ENCODE measurements at regions of chr2 and their contacts with region 1.

Region 1: DNA sequence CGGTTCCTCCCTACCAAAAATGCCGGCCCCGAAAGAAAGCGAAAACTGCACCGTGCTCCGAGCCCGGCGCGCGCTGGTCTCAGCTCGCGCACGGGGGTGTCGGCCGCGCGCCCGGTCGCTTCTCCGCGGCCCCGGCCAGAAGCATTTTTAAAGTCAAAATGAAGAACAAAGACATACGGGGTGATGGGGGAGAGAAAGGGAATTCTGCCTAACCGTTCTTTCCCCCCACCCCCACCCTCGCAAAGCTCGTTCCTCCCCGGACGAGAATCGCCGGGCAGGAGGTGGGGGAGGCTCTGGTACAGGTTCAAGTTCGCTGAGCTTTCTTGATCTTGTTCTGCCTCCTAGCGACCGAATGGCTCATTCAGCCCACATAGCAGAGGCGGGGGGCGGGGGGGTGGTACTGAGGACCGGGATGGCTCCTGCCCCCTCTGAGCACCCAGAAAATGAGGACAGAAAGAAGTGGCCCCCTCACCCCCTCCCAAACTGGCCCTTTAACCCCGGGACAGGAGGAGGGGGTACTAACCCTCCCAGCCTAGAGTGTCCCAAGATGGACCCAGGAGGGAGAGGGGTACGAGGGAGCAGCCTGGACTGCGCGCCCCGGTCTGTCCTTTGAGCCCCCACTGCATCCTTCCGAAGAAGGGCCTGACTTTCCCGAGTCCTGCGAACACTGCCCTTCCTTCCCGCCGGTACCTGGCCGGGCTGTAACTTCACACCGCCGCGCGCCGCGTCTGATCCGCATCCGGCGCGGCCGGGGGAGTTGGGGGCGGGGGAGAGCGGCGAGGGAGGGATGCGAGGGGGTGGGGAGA is 3.1 kb downstream of the BCL11A start:
- DNase-seq: peak in 7 of 9 experiments; percentile 20 to 76 (median 53)
- ATAC-seq: peak; percentile 53
- H3K4me3 ChIP-seq: peak overlapping the region; percentile 58 to 67
- H3K4me3 Mint-ChIP-seq: peak overlapping the region; percentile 90
- H3K27ac ChIP-seq: no peak overlapping the region
- H3K27ac Mint-ChIP-seq: peak overlapping the region; percentile 76
- H3K4me1 ChIP-seq: peaks cover 47% of the 10 kb centered on the region
- H3K4me1 Mint-ChIP-seq: peaks cover 35% of the 10 kb centered on the region
- H3K27me3 ChIP-seq: peaks cover 30 to 49% of the 10 kb centered on the region in 2 experiments
- H3K27me3 Mint-ChIP-seq: peaks cover 63% of the 10 kb centered on the region
- CTCF ChIP-seq: peak; percentile 38

Region 2: DNA sequence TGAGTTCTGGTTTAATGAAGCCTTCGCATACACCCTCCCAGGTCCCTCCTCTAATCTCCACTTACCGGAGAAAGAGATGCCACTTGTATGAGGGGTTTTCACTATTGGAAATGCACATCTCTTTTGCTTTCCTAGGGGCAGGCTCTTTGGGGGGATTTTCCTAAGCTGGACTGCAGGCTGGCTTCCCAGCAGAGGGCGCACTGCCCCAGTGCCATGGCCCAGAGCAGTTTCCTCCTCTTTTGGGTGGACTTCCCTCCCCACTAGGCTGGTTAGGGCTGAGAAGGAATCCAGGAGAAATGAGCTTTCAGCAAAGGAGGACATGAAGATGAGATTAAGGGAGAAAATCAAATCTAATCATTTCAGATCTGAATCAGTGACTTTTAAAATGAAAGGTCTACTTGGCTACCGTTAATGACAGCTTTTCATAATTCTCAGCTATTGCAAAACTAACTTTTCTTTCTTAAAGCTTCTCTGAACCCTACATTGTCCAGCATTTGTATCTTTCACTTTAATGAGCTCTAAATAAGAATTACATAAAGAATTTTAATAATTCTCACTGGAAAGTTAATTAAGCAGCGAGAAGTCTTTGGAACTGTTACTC is 1525.1 kb before region 1 on chr2:
- CTCF ChIA-PET with region 1: no interaction called
- POLR2A ChIA-PET with region 1: no interaction called
- intact Hi-C with region 1: loop called in 1 of 2 experiments (anchors 10 kb)
- DNase-seq: peak in 5 of 9 experiments; percentile 9 to 50 (median 13)
- ATAC-seq: no peak
- H3K4me3 ChIP-seq: no peak overlapping the region
- H3K4me3 Mint-ChIP-seq: no peak overlapping the region
- H3K27ac ChIP-seq: no peak overlapping the region
- H3K27ac Mint-ChIP-seq: no peak overlapping the region
- H3K4me1 ChIP-seq: no peaks in the 10 kb centered on the region
- H3K4me1 Mint-ChIP-seq: no peaks in the 10 kb centered on the region
- H3K27me3 ChIP-seq: no peaks in the 10 kb centered on the region
- H3K27me3 Mint-ChIP-seq: no peaks in the 10 kb centered on the region
- CTCF ChIP-seq: no peak

Region 3: GRCh38 chr2:59301466-59302402 is 1248.6 kb before region 1 on chr2:
- CTCF ChIA-PET with region 1: interaction called, 3 read pairs
- POLR2A ChIA-PET with region 1: no interaction called
- intact Hi-C with region 1: loop called (anchors 2 to 5 kb)
- DNase-seq: peak in 3 of 9 experiments; percentile 6 to 61 (median 26)
- ATAC-seq: no peak
- H3K4me3 ChIP-seq: no peak overlapping the region
- H3K4me3 Mint-ChIP-seq: no peak overlapping the region
- H3K27ac ChIP-seq: no peak overlapping the region
- H3K27ac Mint-ChIP-seq: no peak overlapping the region
- H3K4me1 ChIP-seq: no peaks in the 10 kb centered on the region
- H3K4me1 Mint-ChIP-seq: no peaks in the 10 kb centered on the region
- H3K27me3 ChIP-seq: no peaks in the 10 kb centered on the region
- H3K27me3 Mint-ChIP-seq: no peaks in the 10 kb centered on the region
- CTCF ChIP-seq: peak; percentile 48

Region 4: DNA sequence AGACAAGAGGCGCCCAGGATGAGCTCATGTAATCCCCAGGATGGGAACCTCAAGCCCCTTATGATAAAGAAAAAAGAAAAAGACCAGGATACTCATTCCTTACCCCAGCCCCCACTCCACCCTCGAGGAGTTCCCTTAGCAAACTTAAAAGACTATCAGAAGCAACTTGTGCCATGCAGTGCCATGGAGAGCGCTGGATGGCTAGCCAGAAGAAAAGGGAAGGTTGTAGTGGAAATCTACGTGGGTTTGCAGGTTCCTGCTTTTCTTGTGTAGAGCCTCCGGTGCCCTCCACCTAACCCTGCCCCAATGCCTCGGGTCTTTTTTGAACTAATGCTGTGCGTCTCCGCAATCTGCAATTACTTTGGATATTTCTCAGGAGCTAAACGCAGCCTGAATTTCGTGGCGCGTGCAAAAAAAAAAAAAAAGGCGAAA is 19.3 kb after region 1 on chr2:
- CTCF ChIA-PET with region 1: interaction called, 5 read pairs
- POLR2A ChIA-PET with region 1: no interaction called
- intact Hi-C with region 1: loop called in 1 of 2 experiments (anchors 1 kb)
- DNase-seq: peak in 1 of 9 experiments; percentile 10
- ATAC-seq: no peak
- H3K4me3 ChIP-seq: peak overlapping the region; percentile 21 to 28
- H3K4me3 Mint-ChIP-seq: no peak overlapping the region
- H3K27ac ChIP-seq: no peak overlapping the region
- H3K27ac Mint-ChIP-seq: no peak overlapping the region
- H3K4me1 ChIP-seq: peaks cover 11% of the 10 kb centered on the region
- H3K4me1 Mint-ChIP-seq: no peaks in the 10 kb centered on the region
- H3K27me3 ChIP-seq: peaks cover 8 to 22% of the 10 kb centered on the region in 2 experiments
- H3K27me3 Mint-ChIP-seq: peaks cover 23% of the 10 kb centered on the region
- CTCF ChIP-seq: no peak